ENCODE measurements at regions of chr16 and their contacts with region 1.

Region 1: GRCh38 chr16:56356276-56357240 is 68.8 kb downstream of the AMFR start:
- DNase-seq: peak; percentile 79
- ATAC-seq: peak; percentile 91
- H3K4me3 Mint-ChIP-seq: peak overlapping the region; percentile 78
- H3K27ac Mint-ChIP-seq: peak overlapping the region; percentile 89
- H3K4me1 Mint-ChIP-seq: peaks cover 23% of the 10 kb centered on the region
- H3K27me3 Mint-ChIP-seq: no peaks in the 10 kb centered on the region

Region 2: GRCh38 chr16:55991843-55992242 is 364.7 kb before region 1 on chr16:
- CTCF ChIA-PET with region 1: no interaction called
- DNase-seq: no peak
- ATAC-seq: no peak
- H3K4me3 Mint-ChIP-seq: no peak overlapping the region
- H3K27ac Mint-ChIP-seq: no peak overlapping the region
- H3K4me1 Mint-ChIP-seq: no peaks in the 10 kb centered on the region
- H3K27me3 Mint-ChIP-seq: peaks cover under 1% of the 10 kb centered on the region

Region 3: GRCh38 chr16:56327071-56327928 is 29.3 kb before region 1 on chr16:
- CTCF ChIA-PET with region 1: no interaction called
- DNase-seq: no peak
- ATAC-seq: no peak
- H3K4me3 Mint-ChIP-seq: no peak overlapping the region
- H3K27ac Mint-ChIP-seq: no peak overlapping the region
- H3K4me1 Mint-ChIP-seq: peaks cover 3% of the 10 kb centered on the region
- H3K27me3 Mint-ChIP-seq: no peaks in the 10 kb centered on the region

Region 4: GRCh38 chr16:56343661-56344526 is 12.7 kb before region 1 on chr16:
- CTCF ChIA-PET with region 1: interaction called, 11 read pairs
- DNase-seq: no peak
- ATAC-seq: no peak
- H3K4me3 Mint-ChIP-seq: no peak overlapping the region
- H3K27ac Mint-ChIP-seq: no peak overlapping the region
- H3K4me1 Mint-ChIP-seq: no peaks in the 10 kb centered on the region
- H3K27me3 Mint-ChIP-seq: no peaks in the 10 kb centered on the region

Region 5: DNA sequence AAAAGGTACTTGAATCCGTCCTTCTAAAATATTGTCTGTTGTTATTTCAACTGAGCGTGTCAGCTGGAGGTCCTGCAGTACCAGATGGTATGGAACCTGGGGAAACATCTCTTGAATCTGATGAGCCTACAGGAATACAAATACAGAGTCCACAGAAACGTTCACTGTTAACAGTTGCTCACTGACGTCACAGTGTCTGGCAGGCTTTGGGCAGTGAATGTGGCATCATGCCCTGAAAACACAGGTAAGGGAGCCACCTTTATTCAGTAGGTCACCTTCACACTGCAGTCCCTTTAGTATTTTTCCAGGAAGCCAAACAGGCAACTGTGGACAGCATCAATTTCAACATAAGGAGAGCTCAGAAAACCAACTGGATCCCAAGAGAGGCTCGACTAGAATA is 12.6 kb after region 1 on chr16:
- CTCF ChIA-PET with region 1: interaction called, 16 read pairs
- DNase-seq: no peak
- ATAC-seq: no peak
- H3K4me3 Mint-ChIP-seq: no peak overlapping the region
- H3K27ac Mint-ChIP-seq: no peak overlapping the region
- H3K4me1 Mint-ChIP-seq: peaks cover 14% of the 10 kb centered on the region
- H3K27me3 Mint-ChIP-seq: no peaks in the 10 kb centered on the region